GM12878 (cell line): ENCODE measurements at regions of chr1 and their contacts with region 1.

Region 1: DNA sequence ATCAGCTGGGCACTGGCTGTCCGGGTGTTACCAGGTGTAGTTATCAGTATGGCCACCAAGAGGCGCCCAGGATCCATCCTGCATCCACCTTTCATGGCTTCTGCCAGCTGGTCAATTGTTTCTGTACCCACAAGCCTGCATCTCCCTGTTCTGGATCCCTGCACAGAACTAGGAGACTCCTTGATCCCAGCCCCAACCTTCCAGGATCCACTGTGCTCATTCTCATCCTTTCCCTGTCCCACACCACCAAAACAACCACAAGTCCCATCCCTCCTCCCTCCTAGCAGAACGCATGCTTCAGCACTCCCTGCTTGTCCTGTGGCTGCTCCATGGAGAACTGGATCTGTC is 27.2 kb upstream of the FOXE3 start:
- DNase-seq: no peak
- ATAC-seq: peak; percentile 95
- H3K4me3 ChIP-seq: no peak overlapping the region
- H3K27ac ChIP-seq: no peak overlapping the region
- H3K4me1 ChIP-seq: no peaks in the 10 kb centered on the region
- H3K27me3 ChIP-seq: no peaks in the 10 kb centered on the region
- CTCF ChIP-seq: peak; percentile 76 to 89 (median 79)
- EP300 ChIP-seq: no peak
- POLR2A ChIP-seq: no peak
- RAD21 ChIP-seq: peak; percentile 67

Region 2: DNA sequence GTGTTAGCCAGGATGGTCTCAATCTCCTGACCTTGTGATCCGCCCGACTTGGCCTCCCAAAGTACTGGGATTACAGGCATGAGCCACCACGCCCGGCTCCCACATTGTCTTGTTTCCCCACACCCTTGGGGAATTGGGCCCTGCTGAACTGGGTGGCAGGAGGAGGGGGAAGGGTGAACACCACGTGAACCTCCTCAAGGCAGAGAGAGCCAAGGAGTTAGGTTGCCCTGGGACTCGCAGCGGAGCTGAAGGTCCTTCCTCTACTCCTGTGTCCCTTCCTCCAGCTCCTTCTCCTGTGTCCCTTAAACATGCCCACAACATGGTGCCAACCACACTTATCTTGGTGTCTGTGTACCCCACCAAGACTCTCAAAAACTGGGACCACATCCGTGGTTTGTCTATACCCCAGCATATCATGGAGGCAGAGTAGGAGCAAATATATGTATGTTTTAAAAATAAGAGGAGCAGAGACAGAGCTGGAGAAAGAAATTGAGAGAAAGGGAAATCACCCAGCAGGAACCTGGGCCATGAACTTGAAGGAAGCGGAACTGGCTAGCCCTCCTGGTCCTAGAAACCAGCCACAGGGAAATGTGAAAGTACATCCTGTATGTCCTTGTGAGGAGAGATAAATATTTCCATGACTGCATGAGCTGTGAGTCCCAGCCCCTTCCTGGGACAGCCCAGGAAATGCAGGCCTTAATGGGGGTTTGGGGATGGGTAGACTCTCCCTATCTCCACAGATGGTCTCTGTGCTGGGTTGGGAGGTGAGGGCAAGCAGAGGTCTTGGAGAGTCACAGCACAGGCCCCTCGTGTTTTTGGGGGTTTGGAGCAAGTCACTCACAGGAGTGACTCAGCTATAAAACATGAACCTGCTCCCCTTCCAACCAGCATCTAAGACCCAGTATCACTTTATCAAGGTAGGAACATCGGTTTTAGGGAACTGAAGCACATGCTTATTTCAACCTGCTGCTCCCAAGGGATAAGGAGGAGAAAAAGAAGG is 147.5 kb before region 1 on chr1:
- CTCF ChIA-PET with region 1: no interaction called
- POLR2A ChIA-PET with region 1: no interaction called
- RAD21 ChIA-PET with region 1: no interaction called
- SMC1A ChIA-PET with region 1: no interaction called
- in situ Hi-C with region 1: no loop called
- intact Hi-C with region 1: no loop called
- DNase-seq: no peak
- ATAC-seq: no peak
- H3K4me3 ChIP-seq: no peak overlapping the region
- H3K27ac ChIP-seq: no peak overlapping the region
- H3K4me1 ChIP-seq: no peaks in the 10 kb centered on the region
- H3K27me3 ChIP-seq: no peaks in the 10 kb centered on the region
- CTCF ChIP-seq: no peak
- EP300 ChIP-seq: no peak
- POLR2A ChIP-seq: no peak
- RAD21 ChIP-seq: no peak

Region 3: GRCh38 chr1:47399138-47399845 is 10.4 kb after region 1 on chr1:
- CTCF ChIA-PET with region 1: interaction called, 10 read pairs
- POLR2A ChIA-PET with region 1: interaction called, 6 read pairs
- RAD21 ChIA-PET with region 1: interaction called, 3 read pairs
- SMC1A ChIA-PET with region 1: interaction called, 3 read pairs
- in situ Hi-C with region 1: no loop called
- intact Hi-C with region 1: no loop called
- DNase-seq: no peak
- ATAC-seq: peak; percentile 67
- H3K4me3 ChIP-seq: no peak overlapping the region
- H3K27ac ChIP-seq: no peak overlapping the region
- H3K4me1 ChIP-seq: no peaks in the 10 kb centered on the region
- H3K27me3 ChIP-seq: no peaks in the 10 kb centered on the region
- CTCF ChIP-seq: no peak
- EP300 ChIP-seq: no peak
- POLR2A ChIP-seq: no peak
- RAD21 ChIP-seq: no peak

Region 4: GRCh38 chr1:47409311-47410070 is 20.6 kb after region 1 on chr1:
- CTCF ChIA-PET with region 1: interaction called, 14 read pairs
- POLR2A ChIA-PET with region 1: no interaction called
- RAD21 ChIA-PET with region 1: no interaction called
- SMC1A ChIA-PET with region 1: interaction called, 3 read pairs
- in situ Hi-C with region 1: no loop called
- intact Hi-C with region 1: no loop called
- DNase-seq: no peak
- ATAC-seq: no peak
- H3K4me3 ChIP-seq: no peak overlapping the region
- H3K27ac ChIP-seq: no peak overlapping the region
- H3K4me1 ChIP-seq: peaks cover 5% of the 10 kb centered on the region; the same call in 1 of the 2 replicates
- H3K27me3 ChIP-seq: peaks cover under 1 to 1% of the 10 kb centered on the region in 2 experiments; a peak in 2 of 4 replicates
- CTCF ChIP-seq: no peak
- EP300 ChIP-seq: no peak
- POLR2A ChIP-seq: no peak
- RAD21 ChIP-seq: no peak

Region 5: GRCh38 chr1:47432071-47433036 is 43.5 kb after region 1 on chr1:
- CTCF ChIA-PET with region 1: interaction called, 21 read pairs
- POLR2A ChIA-PET with region 1: interaction called, 3 read pairs
- RAD21 ChIA-PET with region 1: interaction called, 11 read pairs
- SMC1A ChIA-PET with region 1: interaction called, 10 read pairs
- in situ Hi-C with region 1: no loop called
- intact Hi-C with region 1: loop called (anchors 2 kb)
- DNase-seq: peak; percentile 34
- ATAC-seq: peak; percentile 62
- H3K4me3 ChIP-seq: peak overlapping the region; percentile 54; the same call in 1 of the 2 replicates
- H3K27ac ChIP-seq: peak overlapping the region; percentile 38
- H3K4me1 ChIP-seq: peaks cover 23% of the 10 kb centered on the region
- H3K27me3 ChIP-seq: no peaks in the 10 kb centered on the region
- CTCF ChIP-seq: peak; percentile 77 to 81 (median 80)
- EP300 ChIP-seq: no peak
- POLR2A ChIP-seq: no peak
- RAD21 ChIP-seq: peak; percentile 54; the same call in 1 of the 2 replicates

Region 6: DNA sequence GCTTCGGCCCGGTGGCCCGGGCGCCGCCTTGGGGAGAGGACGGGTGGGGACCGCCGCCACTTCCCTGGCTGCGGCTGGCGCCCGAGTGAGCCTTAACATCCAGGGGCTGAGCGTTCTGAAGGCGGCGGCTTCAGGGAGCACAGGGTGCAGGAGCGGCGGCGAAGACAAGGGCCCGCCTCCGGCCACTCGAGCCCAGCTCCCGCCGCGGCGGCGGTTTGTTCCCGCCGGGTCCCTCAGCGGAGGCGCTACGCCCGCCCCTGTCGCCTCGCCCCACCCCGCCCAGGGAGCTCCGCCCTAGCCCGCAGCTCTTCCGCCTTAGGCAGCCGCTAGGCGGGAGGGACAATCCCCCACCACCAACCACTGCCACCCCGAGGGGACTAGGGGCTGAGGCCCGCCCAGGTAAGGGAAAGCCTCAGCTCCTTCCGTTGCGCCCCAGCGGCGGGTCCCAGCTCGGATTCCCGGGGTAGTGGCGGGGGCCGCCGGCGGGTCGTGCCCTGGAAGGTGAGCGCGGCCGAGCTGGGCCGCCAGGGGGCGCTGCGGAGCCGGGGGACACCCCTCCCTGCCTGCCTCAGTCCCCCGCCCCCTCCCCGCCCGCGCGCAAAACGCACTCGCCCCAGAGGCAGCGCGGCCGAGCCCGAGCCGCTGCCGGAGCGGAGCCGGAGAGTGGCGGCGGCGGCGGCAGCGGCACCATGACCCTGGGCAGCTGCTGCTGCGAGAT is 48.7 kb after region 1 on chr1 and contains the start of gene FOXD2:
- CTCF ChIA-PET with region 1: interaction called, 21 read pairs
- POLR2A ChIA-PET with region 1: interaction called, 3 read pairs
- RAD21 ChIA-PET with region 1: interaction called, 11 read pairs
- SMC1A ChIA-PET with region 1: interaction called, 10 read pairs
- in situ Hi-C with region 1: no loop called
- intact Hi-C with region 1: loop called (anchors 2 kb)
- DNase-seq: peak; percentile 59
- ATAC-seq: peak; percentile 84
- H3K4me3 ChIP-seq: peak within 1 kb of the TSS; percentile 88
- H3K27ac ChIP-seq: peak within 1 kb of the TSS; percentile 64
- H3K4me1 ChIP-seq: peaks cover 8% of the 10 kb centered on the region
- H3K27me3 ChIP-seq: peaks cover 12 to 14% of the 10 kb centered on the region in 2 experiments
- CTCF ChIP-seq: peak; percentile 70 to 81 (median 75)
- EP300 ChIP-seq: no peak
- POLR2A ChIP-seq: peak; percentile 70
- RAD21 ChIP-seq: peak; percentile 21; the same call in 1 of the 2 replicates
- polyA plus RNA-seq, gene FOXD2: 0.04 TPM in 1 of 2 experiments, not detected in the other